GM12878 (cell line): ENCODE measurements at regions of chr17 and their contacts with region 1.

Region 1: GRCh38 chr17:80101011-80101945 is at the start of gene GAA:
- DNase-seq: peak; percentile 28
- ATAC-seq: peak; percentile 95
- H3K4me3 ChIP-seq: peak within 1 kb of the TSS; percentile 92
- H3K27ac ChIP-seq: no peak within 1 kb of the TSS
- H3K4me1 ChIP-seq: peaks cover 16% of the 10 kb centered on the region
- H3K27me3 ChIP-seq: no peaks in the 10 kb centered on the region
- CTCF ChIP-seq: peak; percentile 69 to 92 (median 73); a peak in 5 of 6 replicates
- EP300 ChIP-seq: 0 out of 4 replicates have a peak, but pooled peaks of 1 of the 2 experiments have one; percentile 9
- POLR2A ChIP-seq: peak; percentile 74
- RAD21 ChIP-seq: 0 out of 2 replicates have a peak, but pooled peaks have one; percentile 2
- polyA plus RNA-seq, gene GAA: 0.18 to 0.40 TPM

Region 2: DNA sequence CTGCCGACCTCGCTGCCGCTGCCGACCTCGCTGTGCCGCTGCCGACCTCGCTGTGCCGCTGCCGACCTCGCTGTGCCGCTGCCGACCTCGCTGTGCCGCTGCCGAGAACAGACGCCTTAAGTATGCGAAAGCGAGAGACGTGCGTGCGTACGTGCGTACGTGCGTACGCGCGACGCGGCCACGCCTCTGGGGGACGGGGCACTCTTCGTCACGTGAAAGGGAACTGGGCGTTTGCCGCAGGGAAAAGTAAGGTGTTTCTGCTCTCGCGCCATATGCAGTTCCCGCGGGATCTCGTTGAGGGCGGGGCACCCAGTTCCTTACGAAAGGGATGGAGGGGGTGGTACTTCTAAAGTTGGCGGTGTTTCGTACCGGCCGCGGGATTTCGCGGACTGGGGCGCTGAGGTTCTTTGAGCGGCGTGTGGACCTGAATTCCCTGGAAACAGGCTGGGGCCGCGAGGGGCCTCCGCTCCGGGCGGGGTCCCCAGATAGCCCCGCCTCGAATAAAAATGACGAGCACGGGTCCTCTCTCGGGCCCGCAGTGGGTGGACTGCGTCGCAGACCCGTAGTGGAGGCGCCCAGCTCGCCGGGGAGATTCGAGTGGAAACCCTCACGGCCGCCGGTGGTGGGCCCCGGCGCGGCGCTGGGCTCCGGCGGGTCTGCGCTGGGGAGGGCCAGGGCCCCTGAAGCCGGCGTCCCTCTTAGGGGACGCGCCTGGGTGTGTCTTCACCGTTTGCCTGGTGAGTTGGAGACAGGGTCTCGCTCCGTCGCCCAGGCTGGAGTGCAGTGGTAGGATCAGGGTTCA is 46.0 kb after region 1 on chr17 and contains the start of gene EIF4A3:
- CTCF ChIA-PET with region 1: interaction called, 21 read pairs
- POLR2A ChIA-PET with region 1: interaction called, 6 read pairs
- RAD21 ChIA-PET with region 1: interaction called, 9 read pairs
- SMC1A ChIA-PET with region 1: interaction called, 7 read pairs
- in situ Hi-C with region 1: no loop called
- intact Hi-C with region 1: no loop called
- DNase-seq: peak; percentile 98
- ATAC-seq: peak; percentile 93
- H3K4me3 ChIP-seq: peak within 1 kb of the TSS; percentile 92
- H3K27ac ChIP-seq: peak within 1 kb of the TSS; percentile 79
- H3K4me1 ChIP-seq: peaks cover 15% of the 10 kb centered on the region
- H3K27me3 ChIP-seq: no peaks in the 10 kb centered on the region
- CTCF ChIP-seq: peak in 1 of 3 experiments; percentile 10; a peak in 1 of 6 replicates
- EP300 ChIP-seq: no peak
- POLR2A ChIP-seq: peak; percentile 99
- RAD21 ChIP-seq: no peak
- polyA plus RNA-seq, gene EIF4A3: 53.3 to 106 TPM